Stomach (tissue), 19 donors: ENCODE measurements at regions of chr5 and their contacts with region 1.

Region 1: DNA sequence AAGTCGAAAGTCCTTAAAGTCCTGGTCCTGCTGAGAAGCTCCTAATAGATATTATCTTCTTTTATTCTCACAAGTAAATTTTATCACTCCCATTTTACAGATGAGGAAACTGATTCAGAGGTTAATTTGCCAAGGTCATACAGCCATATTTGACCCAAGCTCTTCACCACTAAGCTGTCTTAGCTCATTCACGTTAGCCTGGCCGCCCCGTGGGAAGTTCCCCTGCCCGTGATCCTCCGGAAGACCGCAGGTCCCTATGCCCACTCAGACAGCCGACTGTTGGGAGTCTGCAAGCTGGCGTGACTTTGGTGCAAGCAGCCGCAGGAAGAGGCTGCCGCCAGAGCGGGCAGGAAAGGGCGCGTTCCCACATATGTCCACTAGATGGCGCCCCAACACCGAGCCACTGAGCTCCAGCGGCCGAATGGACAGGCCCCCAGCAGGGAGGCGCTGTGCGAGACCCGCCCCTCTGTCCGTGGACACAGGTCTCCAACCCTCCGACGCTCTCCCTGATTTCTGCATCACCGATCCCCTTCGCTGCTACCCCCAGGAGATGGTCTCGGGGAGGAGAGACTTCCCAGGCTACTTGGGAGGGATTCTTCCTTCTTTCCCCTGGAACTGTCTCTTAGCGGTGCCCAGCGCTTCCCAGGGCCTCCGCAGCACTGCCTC is 10.0 kb upstream of the ARAP3 start:
- DNase-seq: peak; percentile 91 to 95
- H3K4me3 ChIP-seq: peak overlapping the region; percentile 26 to 41 (median 31)
- H3K27ac ChIP-seq: no peak overlapping the region
- H3K4me1 ChIP-seq: peaks cover 9 to 15% (median 12%) of the 10 kb centered on the region in 4 donors
- H3K27me3 ChIP-seq: peaks cover 0 to 40% (median 0%) of the 10 kb centered on the region in 3 donors
- CTCF ChIP-seq: peak in 6 of 7 experiments; percentile 63 to 99 (median 98)
- EP300 ChIP-seq: no peak
- POLR2A ChIP-seq: no peak

Region 2: DNA sequence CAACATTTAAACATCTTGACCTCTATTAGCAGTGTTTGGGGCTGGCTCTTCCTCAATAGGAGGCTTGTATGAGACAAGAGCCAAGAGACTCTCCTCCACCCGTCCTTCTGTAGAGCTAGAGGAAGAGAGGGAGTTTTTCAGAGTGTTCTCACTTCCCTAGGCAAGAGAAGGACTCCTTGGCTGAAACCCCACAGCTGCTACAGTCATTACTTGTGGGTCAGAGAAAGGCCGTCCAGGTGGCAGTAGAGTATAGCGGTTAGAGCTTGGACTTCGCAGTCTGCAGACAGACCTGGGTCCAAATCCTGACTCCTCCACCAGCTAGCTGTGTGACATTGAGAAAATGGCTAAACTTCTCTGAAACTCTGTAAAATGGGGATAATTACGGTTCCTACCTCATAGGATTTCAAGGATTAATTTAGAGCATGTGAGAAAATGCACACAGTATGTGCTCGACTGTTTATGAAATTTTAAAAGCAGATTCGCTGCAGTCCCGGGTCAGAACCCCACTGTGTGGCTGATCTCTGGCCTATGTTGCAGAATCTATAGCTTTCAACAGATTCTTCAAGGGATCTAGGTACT is 70.9 kb after region 1 on chr5:
- intact Hi-C with region 1: no loop called
- DNase-seq: no peak
- H3K4me3 ChIP-seq: no peak overlapping the region
- H3K27ac ChIP-seq: no peak overlapping the region
- H3K4me1 ChIP-seq: peaks cover 0 to 4% (median 0%) of the 10 kb centered on the region in 4 donors
- H3K27me3 ChIP-seq: peaks cover 0 to 47% (median 15%) of the 10 kb centered on the region in 3 donors
- CTCF ChIP-seq: peak in 1 of 7 experiments; percentile 10
- EP300 ChIP-seq: no peak
- POLR2A ChIP-seq: no peak

Region 3: GRCh38 chr5:141883184-141883891 is 191.3 kb after region 1 on chr5:
- intact Hi-C with region 1: loop called (anchors 5 kb)
- DNase-seq: peak in 1 of 2 donors; percentile 87
- H3K4me3 ChIP-seq: no peak overlapping the region
- H3K27ac ChIP-seq: no peak overlapping the region
- H3K4me1 ChIP-seq: peaks cover 7 to 48% (median 34%) of the 10 kb centered on the region in 4 donors
- H3K27me3 ChIP-seq: peaks cover 0 to 81% (median 29%) of the 10 kb centered on the region in 3 donors
- CTCF ChIP-seq: no peak
- EP300 ChIP-seq: no peak
- POLR2A ChIP-seq: no peak

Region 4: GRCh38 chr5:141958113-141958512 is 266.1 kb after region 1 on chr5 and contains the start of gene PCDH12:
- intact Hi-C with region 1: loop called (anchors 5 kb)
- DNase-seq: peak in 1 of 2 donors; percentile 85
- H3K4me3 ChIP-seq: peak within 1 kb of the TSS in 3 of 4 donors; percentile 3 to 17 (median 10)
- H3K27ac ChIP-seq: peak within 1 kb of the TSS in 4 of 5 donors; percentile 21 to 68 (median 38)
- H3K4me1 ChIP-seq: peaks cover 0 to 50% (median 14%) of the 10 kb centered on the region in 4 donors
- H3K27me3 ChIP-seq: no peaks in the 10 kb centered on the region
- CTCF ChIP-seq: no peak
- EP300 ChIP-seq: no peak
- POLR2A ChIP-seq: no peak
- total RNA-seq, gene PCDH12: 1.2 to 7.0 (median 3.7) TPM